ENCODE measurements at regions of chr7 and their contacts with region 1.

Region 1: DNA sequence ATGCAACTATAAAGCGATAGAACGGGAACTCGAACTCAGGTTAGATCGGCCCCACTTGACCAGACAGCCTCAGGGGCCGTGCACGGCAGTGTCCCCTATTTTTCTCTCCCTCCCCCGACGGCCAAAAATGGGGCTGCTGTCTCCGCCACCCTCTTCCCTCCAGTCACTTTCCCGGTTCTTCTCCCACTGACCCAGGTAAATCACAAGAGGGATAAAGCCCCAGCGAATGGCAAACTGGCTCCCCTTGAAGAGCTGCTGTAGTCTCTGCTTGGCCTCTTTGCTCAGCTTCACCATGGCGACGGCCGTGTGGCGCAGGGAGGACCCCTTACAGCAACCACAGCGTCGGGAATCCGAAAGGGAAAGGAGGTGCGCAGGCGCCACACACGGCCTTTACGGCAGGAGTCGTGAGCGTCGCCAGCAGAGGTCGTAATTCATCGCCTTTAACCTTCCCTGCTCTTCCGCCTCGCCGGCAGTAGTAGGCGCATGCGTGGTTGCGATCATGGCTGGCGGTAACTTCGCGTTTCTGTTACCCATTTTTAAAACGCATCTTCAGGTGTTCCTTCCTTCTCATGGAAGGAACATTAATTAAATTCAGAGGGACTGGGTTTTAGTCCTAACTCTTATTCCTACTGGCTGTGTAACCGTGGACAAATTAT is at the start of gene TOMM7:
- DNase-seq: peak; percentile 76
- H3K4me3 ChIP-seq: peak within 1 kb of the TSS; percentile 96
- CTCF ChIP-seq: peak; percentile 19

Region 2: GRCh38 chr7:22811746-22812280 is 10.8 kb before region 1 on chr7:
- CTCF ChIA-PET with region 1: interaction called, 4 read pairs
- POLR2A ChIA-PET with region 1: interaction called, 11 read pairs
- DNase-seq: no peak
- H3K4me3 ChIP-seq: no peak overlapping the region
- CTCF ChIP-seq: no peak

Region 3: GRCh38 chr7:22833113-22833855 is 10.7 kb after region 1 on chr7:
- CTCF ChIA-PET with region 1: interaction called, 14 read pairs
- POLR2A ChIA-PET with region 1: interaction called, 3 read pairs
- DNase-seq: no peak
- H3K4me3 ChIP-seq: no peak overlapping the region
- CTCF ChIP-seq: no peak